ENCODE measurements at regions of chr14 and their contacts with region 1.

Region 1: GRCh38 chr14:89416002-89416995 is 734 bp downstream of the FOXN3 start:
- DNase-seq: peak; percentile 98 to 100
- H3K4me3 ChIP-seq: peak overlapping the region; percentile 86 to 91
- H3K27ac ChIP-seq: peak overlapping the region; percentile 96 to 98
- H3K4me1 ChIP-seq: peaks cover 4 to 14% of the 10 kb centered on the region in 2 donors
- H3K27me3 ChIP-seq: no peaks in the 10 kb centered on the region
- CTCF ChIP-seq: peak in 1 of 3 experiments; percentile 3

Region 2: GRCh38 chr14:88831284-88831683 is 585.0 kb before region 1 on chr14:
- intact Hi-C with region 1: loop called (anchors 10 kb)
- DNase-seq: peak in 1 of 2 donors; percentile 77
- H3K4me3 ChIP-seq: no peak overlapping the region
- H3K27ac ChIP-seq: peak overlapping the region; percentile 56 to 81
- H3K4me1 ChIP-seq: peaks cover 8 to 22% of the 10 kb centered on the region in 2 donors
- H3K27me3 ChIP-seq: no peaks in the 10 kb centered on the region
- CTCF ChIP-seq: no peak

Region 3: DNA sequence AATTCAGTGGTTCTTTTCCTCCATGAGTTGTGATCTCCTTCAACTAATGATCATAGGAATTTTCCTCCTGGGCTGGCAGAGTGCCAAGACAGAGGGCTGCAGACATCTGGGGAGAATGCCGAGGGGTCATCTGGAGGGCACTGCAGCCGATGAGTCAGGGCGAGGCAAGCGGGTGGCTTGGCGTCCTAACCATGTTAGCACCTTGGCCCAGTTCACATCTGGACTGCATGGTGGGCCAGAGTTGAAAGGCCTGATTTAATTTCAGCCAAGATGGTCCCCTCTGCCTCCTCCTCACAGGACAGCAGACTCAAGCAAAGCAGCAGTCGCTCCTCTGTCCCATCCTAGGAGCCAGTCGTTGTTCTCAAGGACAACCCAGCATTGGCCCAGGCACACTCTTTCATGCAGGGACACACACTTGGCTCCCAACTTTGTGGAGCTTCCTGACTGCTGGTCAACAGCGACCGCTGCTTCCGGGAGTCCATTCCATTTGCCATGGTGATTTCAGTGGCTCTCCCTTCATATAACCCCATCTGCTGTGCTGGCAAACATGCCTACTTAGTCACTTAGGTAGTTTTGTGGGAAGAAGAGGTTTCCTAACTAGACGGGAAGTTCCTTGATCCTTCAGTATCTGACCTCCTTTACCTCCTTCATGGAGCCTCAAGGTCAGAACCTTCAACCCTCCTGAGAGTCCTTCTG is 430.0 kb before region 1 on chr14:
- intact Hi-C with region 1: no loop called
- DNase-seq: no peak
- H3K4me3 ChIP-seq: no peak overlapping the region
- H3K27ac ChIP-seq: no peak overlapping the region
- H3K4me1 ChIP-seq: no peaks in the 10 kb centered on the region
- H3K27me3 ChIP-seq: no peaks in the 10 kb centered on the region
- CTCF ChIP-seq: no peak

Region 4: DNA sequence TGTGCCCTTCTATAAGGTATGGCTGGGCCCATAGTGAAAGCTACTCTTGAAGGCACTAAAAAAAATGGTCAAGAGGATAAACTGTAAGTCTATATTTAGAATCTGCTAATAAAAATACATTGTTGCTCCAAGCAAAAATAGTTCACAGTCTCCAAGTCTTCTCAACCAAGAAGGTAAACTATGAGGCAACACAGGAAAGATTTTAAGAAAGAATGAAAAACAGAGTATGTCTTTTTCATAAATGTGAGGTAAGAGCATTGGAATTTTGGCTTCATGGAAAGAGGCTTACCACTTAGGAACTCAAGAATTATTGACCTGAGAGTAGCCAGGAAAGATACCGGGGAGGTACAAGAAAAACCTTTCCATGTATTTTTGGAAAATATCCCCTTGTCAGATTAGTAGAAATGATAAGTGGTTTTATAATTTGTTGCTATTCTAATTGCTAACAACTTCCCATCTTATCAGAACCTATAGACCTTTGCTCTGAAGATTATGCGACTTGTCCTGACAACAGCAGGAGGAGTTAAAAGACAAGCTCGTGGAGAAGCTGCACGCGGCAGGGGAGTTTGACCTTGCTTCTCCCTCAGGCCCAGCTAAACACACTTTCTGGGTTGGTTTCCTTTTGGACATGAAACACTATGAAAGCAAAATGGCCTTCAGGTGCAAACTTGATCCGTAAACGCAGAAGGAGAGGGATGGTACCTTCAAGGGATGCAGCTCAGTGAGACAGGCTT is 237.3 kb before region 1 on chr14:
- intact Hi-C with region 1: loop called (anchors 2 kb)
- DNase-seq: no peak
- H3K4me3 ChIP-seq: no peak overlapping the region
- H3K27ac ChIP-seq: peak overlapping the region; percentile 70 to 76
- H3K4me1 ChIP-seq: peaks cover 5 to 40% of the 10 kb centered on the region in 2 donors
- H3K27me3 ChIP-seq: no peaks in the 10 kb centered on the region
- CTCF ChIP-seq: no peak

Region 5: GRCh38 chr14:89237921-89238529 is 178.3 kb before region 1 on chr14:
- intact Hi-C with region 1: loop called (anchors 5 kb)
- DNase-seq: no peak
- H3K4me3 ChIP-seq: no peak overlapping the region
- H3K27ac ChIP-seq: peak overlapping the region in 1 of 2 donors; percentile 22
- H3K4me1 ChIP-seq: peaks cover 4 to 19% of the 10 kb centered on the region in 2 donors
- H3K27me3 ChIP-seq: no peaks in the 10 kb centered on the region
- CTCF ChIP-seq: peak; percentile 32 to 56 (median 36)

Region 6: GRCh38 chr14:89578156-89578555 is 161.9 kb after region 1 on chr14:
- intact Hi-C with region 1: loop called (anchors 5 kb)
- DNase-seq: no peak
- H3K4me3 ChIP-seq: peak overlapping the region in 1 of 2 donors; percentile 4
- H3K27ac ChIP-seq: peak overlapping the region; percentile 80 to 85
- H3K4me1 ChIP-seq: peaks cover 24 to 33% of the 10 kb centered on the region in 2 donors
- H3K27me3 ChIP-seq: no peaks in the 10 kb centered on the region
- CTCF ChIP-seq: no peak

Region 7: DNA sequence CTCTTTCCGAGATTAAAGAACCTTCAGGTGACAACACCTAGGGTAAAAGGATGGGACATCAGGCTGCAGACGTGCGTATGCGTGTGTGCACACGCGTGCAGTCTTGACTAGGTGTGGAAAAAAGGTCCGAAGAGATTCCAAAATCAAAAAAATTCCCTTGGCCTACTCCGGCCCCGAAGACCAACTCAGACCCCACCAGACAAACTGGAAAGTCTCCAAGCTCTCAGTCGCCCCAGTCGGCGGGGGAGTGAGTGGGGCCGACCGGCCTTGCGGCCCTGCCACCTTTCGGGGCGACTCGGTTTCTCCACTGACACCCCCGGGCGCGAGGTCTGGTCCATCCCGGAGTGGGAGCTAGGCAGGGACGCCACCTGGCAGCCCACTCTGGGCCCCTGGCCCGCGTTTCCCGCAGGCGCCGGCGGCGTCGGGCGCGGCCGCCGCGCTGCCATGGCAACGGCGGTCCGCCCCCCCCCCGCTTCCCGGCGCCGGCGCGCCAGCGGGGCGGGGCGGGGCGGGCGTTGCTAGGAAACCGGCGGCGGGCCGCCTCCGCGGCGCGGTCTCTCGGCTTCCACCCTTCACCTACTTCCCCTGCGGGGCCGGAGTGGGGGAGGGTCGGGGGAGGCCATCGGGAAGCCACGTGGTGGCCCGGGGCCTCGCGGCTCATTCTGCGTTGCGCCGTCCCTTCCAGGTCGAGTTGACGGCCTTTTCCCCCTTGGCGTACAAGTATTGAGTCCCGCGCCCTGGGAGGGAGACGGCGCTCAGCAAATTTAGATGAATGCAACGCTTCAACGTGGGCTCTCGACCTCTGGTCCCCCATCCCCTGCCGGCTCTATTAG is 285.1 kb after region 1 on chr14:
- intact Hi-C with region 1: loop called (anchors 5 kb)
- DNase-seq: peak; percentile 49 to 92
- H3K4me3 ChIP-seq: peak overlapping the region; percentile 55 to 76
- H3K27ac ChIP-seq: peak overlapping the region; percentile 61 to 71
- H3K4me1 ChIP-seq: peaks cover 0 to 12% of the 10 kb centered on the region in 2 donors
- H3K27me3 ChIP-seq: no peaks in the 10 kb centered on the region
- CTCF ChIP-seq: no peak

Region 8: GRCh38 chr14:89915114-89915878 is 499.0 kb after region 1 on chr14:
- intact Hi-C with region 1: loop called (anchors 5 kb)
- DNase-seq: peak in 1 of 2 donors; percentile 81
- H3K4me3 ChIP-seq: no peak overlapping the region
- H3K27ac ChIP-seq: no peak overlapping the region
- H3K4me1 ChIP-seq: peaks cover 0 to 23% of the 10 kb centered on the region in 2 donors
- H3K27me3 ChIP-seq: no peaks in the 10 kb centered on the region
- CTCF ChIP-seq: peak; percentile 79 to 98 (median 95)

Region 9: GRCh38 chr14:89973234-89973823 is 557.0 kb after region 1 on chr14:
- intact Hi-C with region 1: no loop called
- DNase-seq: no peak
- H3K4me3 ChIP-seq: no peak overlapping the region
- H3K27ac ChIP-seq: peak overlapping the region in 1 of 2 donors; percentile 37
- H3K4me1 ChIP-seq: no peaks in the 10 kb centered on the region
- H3K27me3 ChIP-seq: no peaks in the 10 kb centered on the region
- CTCF ChIP-seq: peak; percentile 46 to 83 (median 77)